Dendritic cell treated with granulocyte-macrophage colony-stimulating factor and Interleukin-4, amounts not matched to agents 40 ng/mL and 50 ng/mL, for 4 days (primary cell): ENCODE measurements at regions of chr17 and their contacts with region 1.

Region 1: DNA sequence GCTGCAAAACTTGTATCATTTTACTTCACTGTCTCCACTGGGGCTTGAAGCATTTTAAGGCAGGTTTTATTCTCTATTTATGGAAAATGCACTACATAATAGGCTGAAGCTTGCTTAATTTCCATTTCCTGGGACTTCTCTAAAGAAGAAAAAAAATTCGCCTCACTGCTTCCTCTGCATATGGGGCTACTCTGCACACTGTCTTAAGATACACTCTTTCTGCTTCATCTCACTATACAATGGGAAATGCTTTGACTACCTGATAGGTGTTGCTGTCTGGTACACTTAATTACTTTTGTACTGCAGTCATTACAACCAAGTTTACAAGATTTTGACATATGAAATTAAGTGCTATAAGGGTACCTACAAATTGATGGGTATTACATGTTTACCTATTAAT is 466.0 kb downstream of the KCNJ18 start:
- H3K4me3 Mint-ChIP-seq: no peak overlapping the region
- H3K27ac Mint-ChIP-seq: no peak overlapping the region
- H3K4me1 Mint-ChIP-seq: no peaks in the 10 kb centered on the region
- H3K27me3 Mint-ChIP-seq: no peaks in the 10 kb centered on the region

Region 2: GRCh38 chr17:22138861-22139469 is 19.4 kb before region 1 on chr17:
- intact Hi-C with region 1: loop called (anchors 2 kb)
- H3K4me3 Mint-ChIP-seq: no peak overlapping the region
- H3K27ac Mint-ChIP-seq: no peak overlapping the region
- H3K4me1 Mint-ChIP-seq: no peaks in the 10 kb centered on the region
- H3K27me3 Mint-ChIP-seq: no peaks in the 10 kb centered on the region